ENCODE measurements at regions of chr6 and their contacts with region 1.

Region 1: DNA sequence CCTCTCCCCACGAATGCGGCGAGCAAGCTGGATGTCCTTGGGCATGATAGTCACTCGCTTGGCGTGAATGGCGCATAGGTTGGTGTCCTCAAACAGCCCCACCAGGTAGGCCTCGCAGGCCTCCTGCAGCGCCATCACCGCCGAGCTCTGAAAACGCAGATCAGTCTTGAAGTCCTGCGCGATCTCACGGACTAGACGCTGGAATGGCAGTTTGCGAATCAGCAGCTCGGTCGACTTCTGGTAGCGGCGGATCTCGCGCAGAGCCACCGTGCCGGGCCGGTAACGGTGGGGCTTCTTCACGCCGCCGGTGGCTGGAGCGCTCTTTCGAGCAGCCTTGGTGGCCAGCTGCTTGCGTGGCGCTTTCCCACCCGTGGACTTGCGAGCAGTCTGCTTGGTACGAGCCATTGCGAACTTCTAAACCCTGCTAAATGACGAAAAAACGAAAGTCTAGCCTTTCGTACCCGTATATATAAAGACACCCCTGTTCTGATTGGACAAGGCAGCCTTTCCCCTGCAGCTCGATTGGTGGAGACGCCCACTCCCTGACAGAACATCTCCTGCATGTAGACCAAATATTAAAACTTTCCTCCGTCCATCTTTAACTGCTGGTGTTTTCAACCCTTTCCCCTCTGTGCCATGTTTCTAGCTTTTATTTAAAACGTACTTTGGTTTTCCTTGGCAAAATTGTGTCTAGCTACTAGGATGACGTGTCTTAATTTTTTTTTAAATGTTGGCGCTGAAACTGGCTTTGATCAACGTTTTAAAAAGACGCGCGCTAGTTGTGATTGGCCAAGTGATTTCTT is 109.8 kb downstream of the HFE start:
- DNase-seq: peak; percentile 99
- ATAC-seq: peak; percentile 61
- H3K4me3 ChIP-seq: peak overlapping the region; percentile 73
- H3K27ac ChIP-seq: peak overlapping the region; percentile 80
- H3K4me1 ChIP-seq: no peaks in the 10 kb centered on the region
- H3K27me3 ChIP-seq: no peaks in the 10 kb centered on the region
- CTCF ChIP-seq: no peak
- EP300 ChIP-seq: no peak
- POLR2A ChIP-seq: peak; percentile 99
- RAD21 ChIP-seq: no peak

Region 2: GRCh38 chr6:25623879-25624278 is 573.2 kb before region 1 on chr6:
- CTCF ChIA-PET with region 1: no interaction called
- POLR2A ChIA-PET with region 1: no interaction called
- RAD21 ChIA-PET with region 1: no interaction called
- SMC1A ChIA-PET with region 1: no interaction called
- in situ Hi-C with region 1: no loop called
- intact Hi-C with region 1: no loop called
- DNase-seq: no peak
- ATAC-seq: no peak
- H3K4me3 ChIP-seq: no peak overlapping the region
- H3K27ac ChIP-seq: no peak overlapping the region
- H3K4me1 ChIP-seq: no peaks in the 10 kb centered on the region
- H3K27me3 ChIP-seq: no peaks in the 10 kb centered on the region
- CTCF ChIP-seq: no peak
- EP300 ChIP-seq: no peak
- POLR2A ChIP-seq: no peak
- RAD21 ChIP-seq: no peak

Region 3: DNA sequence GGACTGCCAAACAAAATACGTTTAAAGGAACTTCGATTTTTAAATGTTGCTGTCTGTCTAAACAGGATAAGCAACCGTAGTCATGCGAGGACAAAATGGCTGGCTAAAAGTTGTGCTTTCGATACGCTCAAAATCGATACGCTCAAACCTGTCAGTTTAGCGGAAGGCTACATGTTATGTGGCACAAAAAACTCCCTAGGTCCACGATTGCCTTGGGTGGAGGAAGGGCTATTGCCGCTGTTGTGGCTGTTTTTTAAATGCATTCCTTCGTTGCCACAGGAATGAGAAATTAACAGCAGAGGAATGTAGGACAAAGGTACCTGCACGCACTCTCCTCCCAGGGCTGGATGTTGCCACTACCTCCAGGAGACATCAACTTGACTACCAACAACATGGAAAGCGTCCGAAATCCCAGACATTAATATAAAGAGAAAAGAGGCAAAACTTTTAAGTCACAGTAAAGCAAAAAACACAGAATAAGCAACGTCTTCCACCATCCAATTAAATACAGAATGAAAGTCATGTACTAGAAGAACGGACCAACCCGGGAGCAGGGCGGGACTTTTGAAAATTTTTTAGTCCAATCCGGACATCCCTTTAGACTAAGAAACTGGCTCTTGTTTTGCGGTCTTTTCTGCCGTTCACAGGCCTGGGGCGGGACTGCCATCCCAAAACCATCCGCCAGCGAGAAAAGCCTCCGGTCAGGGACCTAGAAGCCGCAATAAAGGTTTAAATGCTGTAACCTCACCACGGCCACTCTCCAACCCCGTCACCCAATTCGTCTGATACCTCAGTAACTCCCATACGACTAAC is 142.0 kb before region 1 on chr6:
- CTCF ChIA-PET with region 1: no interaction called
- POLR2A ChIA-PET with region 1: interaction called, 6 read pairs
- RAD21 ChIA-PET with region 1: no interaction called
- SMC1A ChIA-PET with region 1: no interaction called
- in situ Hi-C with region 1: no loop called
- intact Hi-C with region 1: loop called (anchors 2 kb)
- DNase-seq: peak; percentile 88
- ATAC-seq: peak; percentile 71
- H3K4me3 ChIP-seq: peak overlapping the region; percentile 75
- H3K27ac ChIP-seq: peak overlapping the region; percentile 93
- H3K4me1 ChIP-seq: peaks cover 4% of the 10 kb centered on the region; the same call in 1 of the 2 replicates
- H3K27me3 ChIP-seq: no peaks in the 10 kb centered on the region
- CTCF ChIP-seq: peak in 1 of 3 experiments; percentile 26; a peak in 1 of 6 replicates
- EP300 ChIP-seq: no peak
- POLR2A ChIP-seq: peak; percentile 67
- RAD21 ChIP-seq: no peak

Region 4: DNA sequence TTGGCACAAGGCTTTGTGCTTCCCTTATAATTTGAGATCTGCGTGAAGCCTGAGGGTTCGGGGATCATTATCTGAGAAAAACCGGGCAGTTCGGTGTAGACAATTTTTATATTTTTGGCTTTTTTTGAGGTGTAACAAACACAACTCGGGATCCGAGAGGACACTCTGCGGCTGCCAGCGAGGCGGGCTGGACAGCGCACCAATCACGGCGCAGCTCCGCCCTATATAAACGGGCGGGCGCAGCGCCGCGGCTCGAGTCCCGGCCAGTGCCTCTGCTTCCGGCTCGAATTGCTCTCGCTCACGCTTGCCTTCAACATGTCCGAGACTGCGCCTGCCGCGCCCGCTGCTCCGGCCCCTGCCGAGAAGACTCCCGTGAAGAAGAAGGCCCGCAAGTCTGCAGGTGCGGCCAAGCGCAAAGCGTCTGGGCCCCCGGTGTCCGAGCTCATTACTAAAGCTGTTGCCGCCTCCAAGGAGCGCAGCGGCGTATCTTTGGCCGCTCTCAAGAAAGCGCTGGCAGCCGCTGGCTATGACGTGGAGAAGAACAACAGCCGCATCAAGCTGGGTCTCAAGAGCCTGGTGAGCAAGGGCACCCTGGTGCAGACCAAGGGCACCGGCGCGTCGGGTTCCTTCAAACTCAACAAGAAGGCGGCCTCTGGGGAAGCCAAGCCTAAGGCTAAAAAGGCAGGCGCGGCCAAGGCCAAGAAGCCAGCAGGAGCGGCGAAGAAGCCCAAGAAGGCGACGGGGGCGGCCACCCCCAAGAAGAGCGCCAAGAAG is 40.8 kb before region 1 on chr6:
- CTCF ChIA-PET with region 1: no interaction called
- POLR2A ChIA-PET with region 1: interaction called, 53 read pairs
- RAD21 ChIA-PET with region 1: interaction called, 4 read pairs
- SMC1A ChIA-PET with region 1: interaction called, 10 read pairs
- in situ Hi-C with region 1: no loop called
- intact Hi-C with region 1: loop called (anchors 2 kb)
- DNase-seq: peak; percentile 90
- ATAC-seq: peak; percentile 65
- H3K4me3 ChIP-seq: peak overlapping the region; percentile 88
- H3K27ac ChIP-seq: peak overlapping the region; percentile 94
- H3K4me1 ChIP-seq: peaks cover 11% of the 10 kb centered on the region
- H3K27me3 ChIP-seq: no peaks in the 10 kb centered on the region
- CTCF ChIP-seq: no peak
- EP300 ChIP-seq: no peak; a peak in 1 of 4 replicates
- POLR2A ChIP-seq: peak; percentile 93
- RAD21 ChIP-seq: no peak

Region 5: GRCh38 chr6:26216356-26216885 is 19.4 kb after region 1 on chr6:
- CTCF ChIA-PET with region 1: interaction called, 25 read pairs
- POLR2A ChIA-PET with region 1: interaction called, 85 read pairs
- RAD21 ChIA-PET with region 1: interaction called, 36 read pairs
- SMC1A ChIA-PET with region 1: interaction called, 32 read pairs
- in situ Hi-C with region 1: no loop called
- intact Hi-C with region 1: loop called (anchors 2 kb)
- DNase-seq: peak; percentile 100
- ATAC-seq: peak; percentile 77
- H3K4me3 ChIP-seq: peak overlapping the region; percentile 75
- H3K27ac ChIP-seq: peak overlapping the region; percentile 93
- H3K4me1 ChIP-seq: peaks cover 12% of the 10 kb centered on the region
- H3K27me3 ChIP-seq: no peaks in the 10 kb centered on the region
- CTCF ChIP-seq: no peak
- EP300 ChIP-seq: no peak
- POLR2A ChIP-seq: peak; percentile 84
- RAD21 ChIP-seq: 0 out of 2 replicates have a peak, but pooled peaks have one; percentile 3

Region 6: DNA sequence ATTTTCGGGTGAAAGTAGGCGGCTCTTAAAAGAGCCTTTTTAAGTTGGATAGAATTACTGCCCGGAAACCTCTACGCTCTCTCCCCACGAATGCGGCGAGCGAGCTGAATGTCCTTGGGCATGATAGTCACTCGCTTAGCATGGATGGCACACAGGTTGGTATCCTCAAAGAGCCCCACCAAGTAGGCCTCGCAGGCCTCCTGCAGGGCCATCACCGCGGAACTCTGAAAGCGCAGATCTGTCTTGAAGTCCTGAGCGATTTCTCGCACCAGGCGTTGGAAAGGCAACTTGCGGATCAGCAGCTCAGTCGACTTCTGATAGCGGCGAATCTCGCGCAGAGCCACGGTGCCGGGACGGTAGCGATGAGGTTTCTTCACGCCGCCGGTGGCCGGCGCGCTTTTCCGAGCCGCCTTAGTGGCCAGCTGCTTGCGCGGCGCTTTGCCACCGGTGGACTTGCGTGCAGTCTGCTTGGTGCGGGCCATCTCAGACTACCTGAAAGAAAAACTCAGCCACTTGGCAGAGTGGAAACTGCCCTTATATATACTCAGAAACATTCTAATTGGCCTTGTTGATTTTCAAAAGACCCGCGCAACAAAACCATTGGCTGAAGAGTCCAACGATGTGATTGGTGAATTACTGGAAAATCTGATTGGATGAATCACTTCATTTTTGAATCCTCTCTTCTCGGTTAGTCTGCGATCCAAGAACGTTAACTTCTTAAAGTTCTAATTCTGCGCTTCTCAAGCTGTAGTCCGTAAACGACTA is 74.0 kb after region 1 on chr6:
- CTCF ChIA-PET with region 1: interaction called, 3 read pairs
- POLR2A ChIA-PET with region 1: interaction called, 16 read pairs
- RAD21 ChIA-PET with region 1: interaction called, 13 read pairs
- SMC1A ChIA-PET with region 1: interaction called, 15 read pairs
- in situ Hi-C with region 1: no loop called
- intact Hi-C with region 1: no loop called
- DNase-seq: peak; percentile 98
- ATAC-seq: peak; percentile 57
- H3K4me3 ChIP-seq: peak overlapping the region; percentile 72
- H3K27ac ChIP-seq: peak overlapping the region; percentile 96
- H3K4me1 ChIP-seq: peaks cover 3% of the 10 kb centered on the region
- H3K27me3 ChIP-seq: no peaks in the 10 kb centered on the region
- CTCF ChIP-seq: no peak
- EP300 ChIP-seq: no peak
- POLR2A ChIP-seq: peak; percentile 95
- RAD21 ChIP-seq: no peak

Region 7: DNA sequence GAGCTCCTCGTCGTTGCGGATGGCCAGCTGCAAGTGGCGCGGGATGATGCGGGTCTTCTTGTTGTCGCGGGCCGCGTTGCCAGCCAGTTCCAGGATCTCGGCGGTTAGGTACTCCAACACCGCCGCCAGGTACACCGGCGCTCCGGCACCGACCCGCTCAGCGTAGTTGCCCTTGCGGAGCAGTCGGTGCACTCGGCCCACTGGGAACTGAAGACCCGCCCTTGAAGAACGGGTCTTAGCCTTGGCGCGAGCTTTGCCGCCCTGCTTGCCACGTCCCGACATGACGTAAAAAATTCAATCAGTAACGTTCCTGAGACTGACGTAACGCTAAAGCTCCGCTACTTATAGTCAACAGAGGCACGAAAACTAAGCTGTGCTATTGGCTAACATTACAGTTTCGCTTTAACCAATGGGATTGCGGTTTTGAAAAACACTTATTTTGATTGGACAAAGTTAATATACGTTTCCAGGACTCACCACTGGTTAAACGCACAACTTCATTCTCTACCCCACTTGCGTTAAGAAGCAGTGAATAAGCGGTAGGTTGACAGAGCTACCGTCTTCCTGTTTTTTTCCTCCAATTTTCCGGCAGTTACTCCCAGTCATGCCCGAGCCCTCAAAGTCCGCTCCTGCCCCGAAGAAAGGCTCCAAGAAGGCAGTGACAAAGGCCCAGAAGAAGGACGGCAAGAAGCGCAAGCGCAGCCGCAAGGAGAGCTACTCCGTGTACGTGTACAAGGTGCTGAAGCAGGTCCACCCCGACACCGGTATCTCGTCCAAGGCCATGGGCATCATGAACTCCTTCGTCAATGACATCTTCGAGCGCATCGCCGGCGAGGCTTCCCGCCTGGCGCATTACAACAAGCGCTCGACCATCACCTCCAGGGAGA is 1641.3 kb after region 1 on chr6:
- CTCF ChIA-PET with region 1: no interaction called
- POLR2A ChIA-PET with region 1: interaction called, 3 read pairs
- RAD21 ChIA-PET with region 1: no interaction called
- SMC1A ChIA-PET with region 1: interaction called, 3 read pairs
- in situ Hi-C with region 1: loop called (anchors 10 kb)
- intact Hi-C with region 1: no loop called
- DNase-seq: peak; percentile 100
- ATAC-seq: peak; percentile 81
- H3K4me3 ChIP-seq: peak overlapping the region; percentile 87
- H3K27ac ChIP-seq: peak overlapping the region; percentile 93
- H3K4me1 ChIP-seq: no peaks in the 10 kb centered on the region
- H3K27me3 ChIP-seq: no peaks in the 10 kb centered on the region
- CTCF ChIP-seq: no peak
- EP300 ChIP-seq: 0 out of 4 replicates have a peak, but pooled peaks of 1 of the 2 experiments have one; percentile 3
- POLR2A ChIP-seq: peak; percentile 81
- RAD21 ChIP-seq: no peak